ENCODE measurements at regions of chr12 and their contacts with region 1.

Region 1: GRCh38 chr12:8662593-8662992 is at the start of gene MFAP5:
- DNase-seq: no peak
- ATAC-seq: no peak
- H3K4me3 ChIP-seq: no peak within 1 kb of the TSS
- H3K4me3 Mint-ChIP-seq: no peak within 1 kb of the TSS
- H3K27ac ChIP-seq: no peak within 1 kb of the TSS
- H3K27ac Mint-ChIP-seq: no peak within 1 kb of the TSS
- H3K4me1 ChIP-seq: no peaks in the 10 kb centered on the region
- H3K4me1 Mint-ChIP-seq: no peaks in the 10 kb centered on the region
- H3K27me3 ChIP-seq: no peaks in the 10 kb centered on the region
- H3K27me3 Mint-ChIP-seq: peaks cover 5 to 8% of the 10 kb centered on the region in 2 donors
- total RNA-seq, gene MFAP5: not detected

Region 2: GRCh38 chr12:8544295-8544694 is 118.3 kb before region 1 on chr12:
- CTCF ChIA-PET with region 1: interaction called, 6 to 11 read pairs
- POLR2A ChIA-PET with region 1: no interaction called
- DNase-seq: peak; percentile 32 to 81 (median 57)
- ATAC-seq: peak; percentile 72 to 80 (median 78)
- H3K4me3 ChIP-seq: no peak overlapping the region
- H3K4me3 Mint-ChIP-seq: peak overlapping the region in 1 of 3 donors; percentile 25
- H3K27ac ChIP-seq: no peak overlapping the region
- H3K27ac Mint-ChIP-seq: no peak overlapping the region
- H3K4me1 ChIP-seq: peaks cover 0 to 5% of the 10 kb centered on the region in 2 experiments
- H3K4me1 Mint-ChIP-seq: peaks cover 0 to 11% (median 9%) of the 10 kb centered on the region in 3 donors
- H3K27me3 ChIP-seq: no peaks in the 10 kb centered on the region
- H3K27me3 Mint-ChIP-seq: peaks cover 14 to 29% of the 10 kb centered on the region in 2 donors

Region 3: DNA sequence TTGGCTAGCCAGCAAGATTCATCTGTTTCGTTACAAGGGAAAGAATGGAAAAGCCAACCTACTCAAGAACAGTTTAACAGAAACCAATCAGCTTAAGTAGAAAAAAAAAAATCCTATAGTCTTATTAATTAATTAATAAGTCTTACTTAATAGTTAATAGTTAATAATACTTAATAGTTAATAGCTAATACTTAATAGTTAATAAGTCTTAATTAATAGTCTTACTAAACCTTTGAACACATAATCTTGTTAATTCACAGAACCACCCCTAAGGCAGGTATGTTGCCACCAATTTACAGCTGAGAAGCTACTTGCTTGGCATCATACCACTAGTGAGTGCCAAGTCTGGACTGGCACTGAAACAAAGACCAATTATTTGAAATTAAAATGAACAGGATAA is 19.8 kb before region 1 on chr12:
- CTCF ChIA-PET with region 1: interaction called, 6 to 14 read pairs
- POLR2A ChIA-PET with region 1: no interaction called
- DNase-seq: no peak
- ATAC-seq: no peak
- H3K4me3 ChIP-seq: no peak overlapping the region
- H3K4me3 Mint-ChIP-seq: no peak overlapping the region
- H3K27ac ChIP-seq: no peak overlapping the region
- H3K27ac Mint-ChIP-seq: peak overlapping the region in 1 of 2 donors; percentile 20
- H3K4me1 ChIP-seq: peaks cover 9 to 16% of the 10 kb centered on the region in 2 experiments
- H3K4me1 Mint-ChIP-seq: peaks cover 28 to 37% (median 35%) of the 10 kb centered on the region in 3 donors
- H3K27me3 ChIP-seq: no peaks in the 10 kb centered on the region
- H3K27me3 Mint-ChIP-seq: no peaks in the 10 kb centered on the region

Region 4: GRCh38 chr12:8648576-8649205 is 13.9 kb before region 1 on chr12:
- CTCF ChIA-PET with region 1: interaction called, 6 to 10 read pairs
- POLR2A ChIA-PET with region 1: no interaction called
- DNase-seq: peak in 8 of 35 experiments; percentile 1 to 37 (median 14)
- ATAC-seq: peak in 3 of 4 experiments; percentile 21 to 36 (median 25)
- H3K4me3 ChIP-seq: no peak overlapping the region
- H3K4me3 Mint-ChIP-seq: no peak overlapping the region
- H3K27ac ChIP-seq: no peak overlapping the region
- H3K27ac Mint-ChIP-seq: peak overlapping the region in 1 of 2 donors; percentile 18
- H3K4me1 ChIP-seq: peaks cover 8 to 21% of the 10 kb centered on the region in 2 experiments
- H3K4me1 Mint-ChIP-seq: peaks cover 25 to 47% (median 46%) of the 10 kb centered on the region in 3 donors
- H3K27me3 ChIP-seq: no peaks in the 10 kb centered on the region
- H3K27me3 Mint-ChIP-seq: no peaks in the 10 kb centered on the region

Region 5: DNA sequence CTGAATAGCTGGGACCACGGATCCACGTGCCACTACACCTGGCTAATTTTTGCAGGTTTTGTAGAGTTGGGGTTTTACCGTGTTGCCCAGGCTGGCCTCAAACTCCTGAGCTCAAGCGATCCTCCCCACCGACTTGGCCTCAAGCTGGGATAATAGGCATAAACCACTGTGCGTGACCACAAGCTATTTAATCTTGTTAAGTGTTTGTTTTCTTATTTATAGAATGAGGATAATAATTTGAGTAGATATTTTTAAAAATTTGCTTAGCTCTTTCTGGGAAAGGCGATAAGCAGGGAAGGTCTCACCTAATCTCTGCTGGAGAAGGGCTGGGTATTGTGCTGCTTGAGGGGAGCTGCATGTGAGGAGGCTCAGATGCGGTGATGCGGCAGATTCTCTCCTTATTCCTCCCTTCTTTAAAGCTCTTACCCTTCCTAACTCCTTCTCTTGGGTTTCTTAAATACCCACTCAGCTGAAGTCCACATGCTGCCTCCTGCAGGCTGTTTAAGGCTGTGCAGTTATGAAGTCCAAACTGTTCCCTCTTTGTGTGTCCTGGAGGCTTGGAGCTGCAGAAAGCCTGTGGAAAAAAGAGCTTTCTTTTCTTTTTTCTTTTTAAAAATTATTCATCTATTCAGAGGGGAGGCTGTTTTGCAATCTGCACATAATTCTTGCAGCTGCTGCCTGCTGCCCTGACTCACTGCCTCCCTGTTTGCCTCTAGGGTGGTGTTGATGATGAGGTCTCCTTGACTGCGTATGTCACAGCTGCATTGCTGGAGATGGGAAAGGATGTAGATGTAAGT is 197.8 kb after region 1 on chr12:
- CTCF ChIA-PET with region 1: interaction called, 10 to 12 read pairs
- POLR2A ChIA-PET with region 1: no interaction called
- DNase-seq: peak in 28 of 35 experiments; percentile 0 to 61 (median 14)
- ATAC-seq: peak in 2 of 4 experiments; percentile 43 to 49
- H3K4me3 ChIP-seq: no peak overlapping the region
- H3K4me3 Mint-ChIP-seq: no peak overlapping the region
- H3K27ac ChIP-seq: no peak overlapping the region
- H3K27ac Mint-ChIP-seq: no peak overlapping the region
- H3K4me1 ChIP-seq: no peaks in the 10 kb centered on the region
- H3K4me1 Mint-ChIP-seq: no peaks in the 10 kb centered on the region
- H3K27me3 ChIP-seq: no peaks in the 10 kb centered on the region
- H3K27me3 Mint-ChIP-seq: peaks cover 0 to 3% of the 10 kb centered on the region in 2 donors

Region 6: DNA sequence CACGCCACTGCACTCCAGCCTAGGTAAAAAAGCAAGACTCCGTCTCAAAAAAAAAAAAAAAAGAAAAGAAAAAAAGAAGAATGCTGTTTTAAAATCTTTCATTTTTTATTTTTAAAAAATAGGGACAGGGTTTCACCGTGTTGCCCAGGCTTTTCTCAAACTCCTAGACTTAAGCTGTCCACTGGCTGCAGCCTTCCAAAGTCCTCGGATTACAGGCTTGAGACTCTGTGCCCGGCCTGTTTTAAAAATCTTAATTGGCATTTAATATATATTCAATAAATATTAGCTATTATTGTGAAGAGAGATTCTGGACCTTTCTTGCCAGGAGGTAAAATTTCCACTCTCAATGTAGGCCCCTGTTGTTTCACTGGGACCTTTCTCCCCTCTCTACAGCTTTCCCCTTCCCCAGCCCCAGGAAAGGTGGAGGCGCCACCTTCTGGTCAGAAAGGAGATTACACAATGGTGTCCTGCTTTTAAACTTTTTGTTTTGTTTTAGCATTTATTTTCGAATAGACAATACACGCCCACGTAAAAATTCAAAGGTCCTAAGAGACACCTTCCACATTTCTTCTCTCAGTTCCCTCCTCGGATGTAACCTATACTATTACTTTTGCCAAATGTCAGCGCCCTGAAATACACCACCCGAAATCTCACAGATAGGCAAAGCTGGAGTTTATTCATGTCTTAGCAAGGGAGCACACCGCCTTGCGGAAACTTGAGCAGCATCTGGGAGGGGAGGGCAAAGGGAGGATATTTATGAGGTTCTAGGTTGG is 227.9 kb after region 1 on chr12:
- CTCF ChIA-PET with region 1: interaction called, 3 to 16 read pairs
- POLR2A ChIA-PET with region 1: interaction called in 1 of 2 experiments, 8 read pairs
- DNase-seq: peak in 34 of 35 experiments; percentile 14 to 79 (median 44)
- ATAC-seq: peak; percentile 81 to 84 (median 82)
- H3K4me3 ChIP-seq: peak overlapping the region; percentile 60 to 65
- H3K4me3 Mint-ChIP-seq: peak overlapping the region; percentile 60 to 90 (median 87)
- H3K27ac ChIP-seq: peak overlapping the region; percentile 23
- H3K27ac Mint-ChIP-seq: peak overlapping the region; percentile 76 to 79
- H3K4me1 ChIP-seq: peaks cover 0 to 3% of the 10 kb centered on the region in 2 experiments
- H3K4me1 Mint-ChIP-seq: peaks cover 0 to 5% (median 4%) of the 10 kb centered on the region in 3 donors
- H3K27me3 ChIP-seq: peaks cover 0 to 4% of the 10 kb centered on the region in 2 experiments
- H3K27me3 Mint-ChIP-seq: no peaks in the 10 kb centered on the region

Region 7: DNA sequence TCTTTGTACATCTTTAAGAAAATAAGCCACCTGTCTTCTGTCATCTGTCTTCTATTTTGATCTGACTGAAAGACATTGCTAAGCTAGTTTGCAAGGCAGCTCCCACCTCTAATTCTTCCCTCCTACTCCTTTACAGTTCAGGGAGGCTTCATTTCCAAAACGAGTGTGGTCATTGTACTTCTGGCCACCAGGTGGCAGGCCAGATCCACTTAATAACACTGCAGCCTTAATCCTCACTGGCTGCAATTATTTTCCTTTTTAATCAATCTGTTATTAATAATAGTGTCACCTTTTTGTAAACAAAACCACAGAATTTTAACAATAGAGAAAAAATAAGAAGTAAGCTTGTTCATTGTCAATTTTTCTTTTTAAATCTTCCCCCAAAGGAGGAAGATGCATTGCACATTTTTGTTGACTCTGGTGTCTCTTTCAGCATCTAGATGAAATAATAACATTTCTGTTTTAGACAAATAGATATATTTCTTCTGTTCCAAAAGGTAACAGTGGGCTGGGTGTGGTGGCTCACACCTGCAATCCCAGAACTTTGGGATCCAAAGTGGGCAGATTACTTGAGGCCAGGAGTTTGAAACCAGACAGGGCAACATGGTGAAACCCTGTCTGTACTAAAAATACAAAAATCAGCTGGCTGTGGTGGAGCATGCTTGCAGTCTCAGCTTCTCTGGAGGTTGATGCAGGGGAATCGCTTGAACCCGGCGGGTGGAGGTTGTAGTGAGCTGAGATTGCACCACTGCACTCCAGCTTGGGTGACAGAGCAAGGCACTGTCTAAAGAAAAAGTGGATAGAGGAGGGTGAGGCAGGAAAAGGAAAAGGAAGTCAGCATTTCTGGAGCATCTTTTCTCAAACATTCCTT is 1573.4 kb after region 1 on chr12:
- CTCF ChIA-PET with region 1: no interaction called
- POLR2A ChIA-PET with region 1: interaction called in 1 of 2 experiments, 10 read pairs
- DNase-seq: peak in 27 of 35 experiments; percentile 18 to 80 (median 39)
- ATAC-seq: peak in 1 of 4 experiments; percentile 73
- H3K4me3 ChIP-seq: no peak overlapping the region
- H3K4me3 Mint-ChIP-seq: no peak overlapping the region
- H3K27ac ChIP-seq: no peak overlapping the region
- H3K27ac Mint-ChIP-seq: peak overlapping the region in 1 of 2 donors; percentile 36
- H3K4me1 ChIP-seq: peaks cover 0 to 13% of the 10 kb centered on the region in 2 experiments
- H3K4me1 Mint-ChIP-seq: peaks cover 0 to 10% (median 4%) of the 10 kb centered on the region in 3 donors
- H3K27me3 ChIP-seq: no peaks in the 10 kb centered on the region
- H3K27me3 Mint-ChIP-seq: no peaks in the 10 kb centered on the region

Measured in T-cell (primary cell).